CD14-positive monocyte (primary cell): ENCODE measurements at regions of chr4 and their contacts with region 1.

Region 1: GRCh38 chr4:54233277-54233696 is 4.2 kb downstream of the PDGFRA start:
- DNase-seq: peak; percentile 68 to 76 (median 69)
- H3K4me3 ChIP-seq: peak overlapping the region; percentile 27 to 74 (median 32)
- H3K4me3 Mint-ChIP-seq: peak overlapping the region; percentile 75 to 93
- H3K27ac ChIP-seq: no peak overlapping the region
- H3K27ac Mint-ChIP-seq: no peak overlapping the region
- H3K4me1 ChIP-seq: peaks cover 38 to 48% of the 10 kb centered on the region in 2 donors
- H3K4me1 Mint-ChIP-seq: peaks cover 44% of the 10 kb centered on the region
- H3K27me3 ChIP-seq: peaks cover 39 to 61% of the 10 kb centered on the region in 2 donors
- H3K27me3 Mint-ChIP-seq: peaks cover 53 to 77% (median 65%) of the 10 kb centered on the region in 3 donors
- CTCF ChIP-seq: peak; percentile 71

Region 2: DNA sequence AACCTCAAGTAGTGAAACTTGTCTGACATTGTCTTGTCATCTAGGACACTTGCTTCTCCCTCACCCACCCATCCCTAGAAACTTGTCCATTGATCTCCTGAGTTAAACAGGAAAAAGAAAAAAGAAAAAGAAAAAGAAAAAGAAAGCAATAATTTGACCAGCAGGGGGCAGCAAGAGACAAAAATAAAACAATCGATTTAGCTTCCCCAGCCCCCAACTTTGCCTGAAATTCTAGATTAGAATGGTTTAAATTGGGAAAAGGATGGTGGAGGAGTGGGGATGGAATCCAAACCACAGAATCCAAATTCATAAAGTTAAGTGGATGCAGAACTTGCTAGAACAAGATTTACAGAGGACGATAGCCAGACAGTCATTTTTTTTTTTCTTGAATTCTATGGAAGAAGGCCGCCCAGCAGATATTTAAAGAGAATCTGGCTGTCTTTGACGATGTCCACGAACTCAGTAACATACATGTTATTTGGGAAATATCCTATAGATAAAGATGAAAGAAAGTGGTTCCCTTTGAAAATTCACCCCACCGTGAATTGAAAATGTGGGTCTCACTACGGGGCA is 1857.1 kb before region 1 on chr4:
- intact Hi-C with region 1: loop called (anchors 10 kb)
- DNase-seq: peak in 1 of 3 donors; percentile 4
- H3K4me3 ChIP-seq: no peak overlapping the region
- H3K4me3 Mint-ChIP-seq: no peak overlapping the region
- H3K27ac ChIP-seq: no peak overlapping the region
- H3K27ac Mint-ChIP-seq: no peak overlapping the region
- H3K4me1 ChIP-seq: no peaks in the 10 kb centered on the region
- H3K4me1 Mint-ChIP-seq: no peaks in the 10 kb centered on the region
- H3K27me3 ChIP-seq: no peaks in the 10 kb centered on the region
- H3K27me3 Mint-ChIP-seq: peaks cover 1 to 6% (median 3%) of the 10 kb centered on the region in 3 donors
- CTCF ChIP-seq: peak; percentile 81

Region 3: GRCh38 chr4:52545099-52546069 is 1687.9 kb before region 1 on chr4:
- intact Hi-C with region 1: loop called in 1 of 2 experiments (anchors 10 kb)
- DNase-seq: peak; percentile 15 to 42 (median 39)
- H3K4me3 ChIP-seq: no peak overlapping the region
- H3K4me3 Mint-ChIP-seq: no peak overlapping the region
- H3K27ac ChIP-seq: no peak overlapping the region
- H3K27ac Mint-ChIP-seq: no peak overlapping the region
- H3K4me1 ChIP-seq: no peaks in the 10 kb centered on the region
- H3K4me1 Mint-ChIP-seq: no peaks in the 10 kb centered on the region
- H3K27me3 ChIP-seq: no peaks in the 10 kb centered on the region
- H3K27me3 Mint-ChIP-seq: peaks cover 0 to 3% (median 3%) of the 10 kb centered on the region in 3 donors
- CTCF ChIP-seq: peak; percentile 84

Region 4: DNA sequence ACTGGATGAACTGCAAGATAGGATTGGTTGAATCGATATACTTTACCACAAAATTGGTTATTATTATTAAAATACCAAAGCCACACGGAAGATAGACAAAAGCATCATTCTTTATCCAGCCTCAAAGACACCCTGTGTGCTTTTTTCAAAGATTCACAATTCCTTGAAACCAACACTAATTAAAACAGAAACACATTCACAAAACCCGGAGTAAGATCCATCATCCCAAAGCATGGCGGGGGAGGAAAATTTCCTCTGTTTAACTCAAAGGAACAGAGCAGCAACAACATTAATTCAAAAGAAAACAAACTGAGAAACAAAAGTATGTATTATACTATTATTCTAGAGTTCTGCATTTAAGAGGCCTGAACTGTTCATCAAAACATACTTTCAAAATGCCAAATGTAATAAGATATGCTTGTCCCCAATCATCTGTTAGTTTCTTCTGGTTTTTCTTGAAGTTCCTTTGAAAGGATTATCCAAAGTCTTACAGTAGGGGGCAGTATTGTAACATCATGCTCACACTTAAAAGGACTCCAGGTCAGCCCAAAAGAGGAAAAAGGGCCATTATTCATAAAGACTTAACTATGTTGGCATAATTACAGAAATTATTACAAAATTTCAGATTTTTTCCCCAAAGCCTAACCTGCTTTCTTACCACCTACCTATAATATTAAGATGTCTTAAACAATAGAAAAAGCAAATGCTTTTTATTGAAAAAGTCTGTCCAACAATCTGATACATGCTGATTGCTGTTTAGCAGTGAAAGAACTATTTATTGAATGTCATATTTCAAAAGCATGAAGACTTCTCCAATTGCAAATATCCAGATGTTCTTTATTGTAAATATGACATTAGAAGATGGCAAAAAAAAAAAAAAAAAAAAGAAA is 1036.2 kb before region 1 on chr4:
- intact Hi-C with region 1: loop called (anchors 5 kb)
- DNase-seq: peak; percentile 34 to 53 (median 48)
- H3K4me3 ChIP-seq: no peak overlapping the region
- H3K4me3 Mint-ChIP-seq: no peak overlapping the region
- H3K27ac ChIP-seq: no peak overlapping the region
- H3K27ac Mint-ChIP-seq: no peak overlapping the region
- H3K4me1 ChIP-seq: no peaks in the 10 kb centered on the region
- H3K4me1 Mint-ChIP-seq: no peaks in the 10 kb centered on the region
- H3K27me3 ChIP-seq: no peaks in the 10 kb centered on the region
- H3K27me3 Mint-ChIP-seq: peaks cover 0 to 2% (median 0%) of the 10 kb centered on the region in 3 donors
- CTCF ChIP-seq: peak; percentile 78

Region 5: DNA sequence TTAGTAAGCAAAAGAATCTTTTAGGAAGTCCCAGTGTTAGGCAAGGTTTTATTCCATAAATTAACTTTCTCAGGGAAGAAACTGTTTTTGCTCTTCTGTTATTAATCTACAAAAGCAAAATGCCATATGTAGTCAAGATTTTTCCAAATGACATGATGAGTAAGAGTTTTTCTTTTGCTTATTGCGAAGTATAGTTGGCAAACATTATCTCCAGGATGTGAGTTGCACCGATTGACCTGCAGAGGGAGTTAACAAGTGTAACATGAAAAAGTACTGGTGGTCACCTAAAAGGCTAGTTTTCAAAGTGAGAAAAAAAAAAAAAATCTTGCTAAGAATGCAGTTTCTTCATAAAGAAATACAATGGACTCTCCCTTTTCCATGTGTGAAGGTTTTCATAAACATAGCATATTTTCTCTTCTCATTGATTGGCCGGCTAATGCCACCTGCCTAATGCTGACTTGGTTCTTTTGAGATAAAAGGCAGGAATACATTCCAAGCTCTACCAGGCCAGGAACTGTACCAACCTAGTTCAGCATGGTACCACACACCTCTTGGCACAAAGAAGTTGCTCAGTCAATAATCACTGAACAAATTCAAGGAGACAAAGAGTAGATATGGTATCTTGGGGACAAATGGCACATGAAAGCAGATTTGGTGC is 742.2 kb before region 1 on chr4:
- intact Hi-C with region 1: loop called in 1 of 2 experiments (anchors 10 kb)
- DNase-seq: peak in 1 of 3 donors; percentile 12
- H3K4me3 ChIP-seq: no peak overlapping the region
- H3K4me3 Mint-ChIP-seq: no peak overlapping the region
- H3K27ac ChIP-seq: no peak overlapping the region
- H3K27ac Mint-ChIP-seq: no peak overlapping the region
- H3K4me1 ChIP-seq: no peaks in the 10 kb centered on the region
- H3K4me1 Mint-ChIP-seq: no peaks in the 10 kb centered on the region
- H3K27me3 ChIP-seq: no peaks in the 10 kb centered on the region
- H3K27me3 Mint-ChIP-seq: peaks cover 2 to 6% (median 3%) of the 10 kb centered on the region in 3 donors
- CTCF ChIP-seq: peak; percentile 46

Region 6: DNA sequence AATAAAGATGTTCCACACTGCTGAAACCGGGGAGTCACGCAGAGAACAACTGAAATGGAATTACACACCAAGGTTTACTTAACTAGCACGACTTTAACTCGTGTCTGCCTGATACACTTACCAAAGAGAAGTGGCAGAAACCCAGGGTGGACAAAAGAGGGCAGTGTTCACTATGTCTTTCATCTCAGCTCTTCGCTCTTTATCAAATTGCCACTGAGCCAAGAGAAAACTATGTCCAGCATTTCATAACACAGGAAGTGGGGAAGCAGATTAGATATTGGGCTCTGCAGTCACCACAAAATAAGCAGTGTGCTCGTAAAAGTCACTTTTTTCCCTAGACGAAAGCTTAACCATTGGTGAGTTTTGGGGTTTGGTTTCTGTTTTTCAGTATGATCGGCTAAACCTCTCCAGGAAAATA is 324.6 kb before region 1 on chr4:
- intact Hi-C with region 1: loop called in 1 of 2 experiments (anchors 2 kb)
- DNase-seq: peak; percentile 62 to 83 (median 78)
- H3K4me3 ChIP-seq: peak overlapping the region; percentile 14 to 79 (median 67)
- H3K4me3 Mint-ChIP-seq: peak overlapping the region; percentile 39 to 85
- H3K27ac ChIP-seq: peak overlapping the region in 1 of 2 donors; percentile 64
- H3K27ac Mint-ChIP-seq: peak overlapping the region in 5 of 7 donors; percentile 35 to 50 (median 46)
- H3K4me1 ChIP-seq: peaks cover 42 to 49% of the 10 kb centered on the region in 2 donors
- H3K4me1 Mint-ChIP-seq: peaks cover 48% of the 10 kb centered on the region
- H3K27me3 ChIP-seq: peaks cover 16 to 21% of the 10 kb centered on the region in 2 donors
- H3K27me3 Mint-ChIP-seq: peaks cover 4 to 13% (median 13%) of the 10 kb centered on the region in 3 donors
- CTCF ChIP-seq: peak; percentile 86

Region 7: GRCh38 chr4:54632537-54632936 is 399.2 kb after region 1 on chr4:
- intact Hi-C with region 1: no loop called
- DNase-seq: no peak
- H3K4me3 ChIP-seq: no peak overlapping the region
- H3K4me3 Mint-ChIP-seq: no peak overlapping the region
- H3K27ac ChIP-seq: no peak overlapping the region
- H3K27ac Mint-ChIP-seq: no peak overlapping the region
- H3K4me1 ChIP-seq: no peaks in the 10 kb centered on the region
- H3K4me1 Mint-ChIP-seq: peaks cover 6% of the 10 kb centered on the region
- H3K27me3 ChIP-seq: no peaks in the 10 kb centered on the region
- H3K27me3 Mint-ChIP-seq: peaks cover 0 to 7% (median 0%) of the 10 kb centered on the region in 3 donors
- CTCF ChIP-seq: no peak